ENCODE measurements at regions of chr4 and their contacts with region 1.

Region 1: DNA sequence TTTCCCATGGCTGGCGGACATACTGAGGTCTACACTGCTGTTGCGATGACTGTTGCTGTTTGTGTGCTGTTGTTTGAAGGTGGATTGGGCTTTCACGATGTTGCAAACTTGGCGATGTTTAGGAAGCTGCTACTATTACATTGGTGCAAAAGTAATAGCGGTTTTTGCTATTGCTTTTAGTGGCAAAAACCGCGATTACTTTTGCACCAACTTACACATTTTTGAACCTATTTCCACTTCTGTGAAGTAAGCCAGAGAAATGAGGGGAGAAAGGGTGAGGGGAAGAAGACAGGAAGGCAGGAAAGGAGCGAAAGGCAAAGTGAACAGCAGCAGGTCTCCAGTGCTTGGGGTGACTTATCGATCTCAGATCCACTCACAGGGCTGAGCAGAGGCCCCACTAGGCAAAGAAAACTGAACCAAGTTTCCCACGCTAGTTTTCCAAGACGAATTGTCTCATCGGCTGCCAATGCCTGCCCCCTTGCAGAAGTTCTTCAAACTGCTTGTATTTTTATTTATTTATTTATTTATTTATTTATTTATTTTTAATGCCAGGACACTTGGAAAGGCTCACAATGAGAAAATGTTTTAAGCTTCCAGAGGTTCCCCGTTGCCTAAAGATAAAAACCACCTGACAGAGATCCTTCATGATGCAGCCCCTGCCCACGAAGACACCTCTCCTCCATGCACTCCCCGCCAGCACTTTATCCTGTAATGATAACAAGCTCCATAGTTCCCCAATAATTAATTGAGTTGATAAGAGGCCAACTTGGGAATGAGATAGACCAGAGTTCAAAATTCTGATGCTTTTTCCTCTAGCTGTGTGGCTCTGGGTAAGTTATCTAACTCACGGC is 43.3 kb downstream of the QDPR start:
- DNase-seq: peak in 4 of 5 donors; percentile 24 to 40 (median 32)
- H3K4me3 ChIP-seq: no peak overlapping the region
- H3K27ac ChIP-seq: no peak overlapping the region
- H3K4me1 ChIP-seq: no peaks in the 10 kb centered on the region
- H3K27me3 ChIP-seq: no peaks in the 10 kb centered on the region
- CTCF ChIP-seq: no peak
- EP300 ChIP-seq: no peak
- POLR2A ChIP-seq: no peak

Region 2: DNA sequence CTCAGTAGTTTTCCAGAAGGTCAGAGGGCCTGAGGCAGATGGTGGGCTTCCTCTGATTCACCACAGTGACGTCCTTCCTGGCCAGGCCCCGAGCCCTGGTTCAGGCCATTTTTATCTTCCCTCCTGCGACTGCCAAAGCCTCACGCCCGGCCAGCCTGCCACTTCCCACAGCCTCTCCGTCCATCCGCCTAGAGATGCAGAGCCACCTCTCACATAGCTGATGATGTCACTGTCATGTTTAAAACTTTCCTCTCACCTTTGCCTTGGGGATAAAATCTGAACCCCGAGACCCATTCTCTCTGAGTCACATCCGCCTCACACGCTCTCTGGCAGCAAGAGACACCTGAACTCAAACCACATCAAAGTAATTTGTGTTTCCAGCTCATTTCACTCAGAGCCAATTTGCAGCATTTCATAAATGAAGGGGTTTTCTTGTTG is 132.1 kb before region 1 on chr4:
- intact Hi-C with region 1: loop called in 1 of 4 experiments (anchors 10 kb)
- DNase-seq: peak in 2 of 5 donors; percentile 26 to 41
- H3K4me3 ChIP-seq: no peak overlapping the region
- H3K27ac ChIP-seq: no peak overlapping the region
- H3K4me1 ChIP-seq: no peaks in the 10 kb centered on the region
- H3K27me3 ChIP-seq: no peaks in the 10 kb centered on the region
- CTCF ChIP-seq: no peak
- EP300 ChIP-seq: no peak
- POLR2A ChIP-seq: no peak